PC-9 (cell line): ENCODE measurements at regions of chr7 and their contacts with region 1.

Region 1: GRCh38 chr7:131293018-131293417 is 34.7 kb upstream of the MKLN1 start:
- DNase-seq: no peak
- H3K4me3 ChIP-seq: no peak overlapping the region
- H3K27ac ChIP-seq: no peak overlapping the region
- H3K4me1 ChIP-seq: peaks cover 6% of the 10 kb centered on the region; the same call in 1 of the 2 replicates
- H3K27me3 ChIP-seq: no peaks in the 10 kb centered on the region
- CTCF ChIP-seq: no peak

Region 2: GRCh38 chr7:131170440-131171105 is 122.4 kb before region 1 on chr7:
- CTCF ChIA-PET with region 1: interaction called, 12 read pairs
- POLR2A ChIA-PET with region 1: no interaction called
- intact Hi-C with region 1: no loop called
- DNase-seq: no peak
- H3K4me3 ChIP-seq: no peak overlapping the region
- H3K27ac ChIP-seq: peak overlapping the region; percentile 26; the same call in 1 of the 2 replicates
- H3K4me1 ChIP-seq: peaks cover 48% of the 10 kb centered on the region
- H3K27me3 ChIP-seq: no peaks in the 10 kb centered on the region
- CTCF ChIP-seq: no peak

Region 3: GRCh38 chr7:131231381-131232220 is 61.4 kb before region 1 on chr7:
- CTCF ChIA-PET with region 1: no interaction called
- POLR2A ChIA-PET with region 1: no interaction called
- intact Hi-C with region 1: no loop called
- DNase-seq: no peak
- H3K4me3 ChIP-seq: no peak overlapping the region
- H3K27ac ChIP-seq: peak overlapping the region; percentile 33; the same call in 1 of the 2 replicates
- H3K4me1 ChIP-seq: peaks cover 21% of the 10 kb centered on the region
- H3K27me3 ChIP-seq: no peaks in the 10 kb centered on the region
- CTCF ChIP-seq: no peak

Region 4: GRCh38 chr7:131274984-131275383 is 18.0 kb before region 1 on chr7:
- CTCF ChIA-PET with region 1: no interaction called
- POLR2A ChIA-PET with region 1: interaction called, 14 read pairs
- intact Hi-C with region 1: no loop called
- DNase-seq: no peak
- H3K4me3 ChIP-seq: no peak overlapping the region
- H3K27ac ChIP-seq: no peak overlapping the region
- H3K4me1 ChIP-seq: no peaks in the 10 kb centered on the region
- H3K27me3 ChIP-seq: no peaks in the 10 kb centered on the region
- CTCF ChIP-seq: no peak